Activated B cell treated with CpG ODN at 0.5 μM for 24 hours (primary cell): ENCODE measurements at regions of chr12 and their contacts with region 1.

Region 1: GRCh38 chr12:92928962-92929915 is at the start of gene EEA1:
- DNase-seq: peak; percentile 91
- ATAC-seq: peak; percentile 84
- H3K4me3 Mint-ChIP-seq: peak within 1 kb of the TSS; percentile 89
- H3K27ac Mint-ChIP-seq: peak within 1 kb of the TSS; percentile 96
- H3K4me1 Mint-ChIP-seq: peaks cover 32% of the 10 kb centered on the region
- H3K27me3 Mint-ChIP-seq: no peaks in the 10 kb centered on the region
- CTCF ChIP-seq: no peak
- total RNA-seq, gene EEA1: 21.3 and 22.6 TPM in 2 replicates

Region 2: DNA sequence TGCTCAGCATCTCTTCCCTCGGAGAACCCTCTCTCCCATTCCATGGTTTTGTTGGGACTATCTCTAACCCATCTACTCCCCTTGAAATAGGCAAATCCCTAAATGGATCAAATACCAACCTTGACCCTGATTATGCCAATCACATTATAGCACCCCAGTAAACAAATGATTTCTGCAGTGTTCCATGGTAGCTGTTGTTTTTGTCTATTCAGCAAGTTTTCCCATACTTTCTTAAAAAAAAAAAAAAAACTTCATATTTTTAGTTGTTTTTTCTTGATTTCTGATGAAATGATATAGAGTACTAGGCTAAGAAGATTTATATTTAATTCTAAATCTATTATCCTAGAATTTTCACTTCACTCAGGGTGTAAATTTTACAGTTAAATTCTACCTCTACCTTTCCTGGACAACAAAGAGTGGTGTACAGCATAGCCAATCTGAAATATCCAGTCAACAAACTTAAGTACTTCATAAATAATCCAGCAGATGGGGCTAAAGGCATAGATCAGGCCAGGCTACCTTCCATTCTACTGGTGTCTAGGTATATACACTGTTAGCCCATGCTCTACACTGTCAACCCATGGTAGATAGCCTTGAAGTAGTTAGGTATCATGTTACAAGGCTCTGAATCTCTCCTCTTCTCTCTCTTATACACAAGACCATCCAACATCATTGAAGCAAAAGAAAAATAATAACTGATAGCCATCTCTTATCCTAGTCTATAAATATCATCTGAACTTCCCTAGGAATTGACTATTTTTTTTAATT is 144.3 kb before region 1 on chr12:
- CTCF ChIA-PET with region 1: no interaction called
- POLR2A ChIA-PET with region 1: no interaction called
- intact Hi-C with region 1: loop called (anchors 5 kb)
- DNase-seq: no peak
- ATAC-seq: peak; percentile 98
- H3K4me3 Mint-ChIP-seq: no peak overlapping the region
- H3K27ac Mint-ChIP-seq: no peak overlapping the region
- H3K4me1 Mint-ChIP-seq: no peaks in the 10 kb centered on the region
- H3K27me3 Mint-ChIP-seq: no peaks in the 10 kb centered on the region
- CTCF ChIP-seq: no peak

Region 3: GRCh38 chr12:92844151-92844763 is 85.0 kb before region 1 on chr12:
- CTCF ChIA-PET with region 1: no interaction called
- POLR2A ChIA-PET with region 1: no interaction called
- intact Hi-C with region 1: no loop called
- DNase-seq: no peak
- ATAC-seq: no peak
- H3K4me3 Mint-ChIP-seq: no peak overlapping the region
- H3K27ac Mint-ChIP-seq: no peak overlapping the region
- H3K4me1 Mint-ChIP-seq: no peaks in the 10 kb centered on the region
- H3K27me3 Mint-ChIP-seq: no peaks in the 10 kb centered on the region
- CTCF ChIP-seq: no peak

Region 4: DNA sequence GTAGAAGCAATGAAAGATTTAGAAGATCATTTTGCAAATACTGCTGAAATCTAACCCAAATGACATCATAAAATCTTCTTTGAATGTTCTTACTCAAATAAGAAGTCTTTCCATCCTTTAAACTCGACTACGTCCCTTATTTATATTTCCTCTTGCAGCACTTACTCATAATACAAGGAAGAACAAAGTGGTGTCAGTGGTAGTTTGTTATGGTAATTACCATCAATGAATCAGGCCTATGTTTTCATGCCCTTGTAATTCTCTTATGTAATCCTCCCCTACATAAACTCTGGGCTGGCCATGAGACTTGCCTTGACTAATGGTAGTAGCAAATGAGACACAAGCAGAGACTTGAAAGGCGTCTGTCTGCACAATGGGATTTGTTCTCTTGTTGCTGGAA is 17.2 kb before region 1 on chr12:
- CTCF ChIA-PET with region 1: no interaction called
- POLR2A ChIA-PET with region 1: no interaction called
- intact Hi-C with region 1: loop called (anchors 1 kb)
- DNase-seq: no peak
- ATAC-seq: no peak
- H3K4me3 Mint-ChIP-seq: no peak overlapping the region
- H3K27ac Mint-ChIP-seq: peak overlapping the region; percentile 9
- H3K4me1 Mint-ChIP-seq: peaks cover 42% of the 10 kb centered on the region
- H3K27me3 Mint-ChIP-seq: no peaks in the 10 kb centered on the region
- CTCF ChIP-seq: no peak

Region 5: DNA sequence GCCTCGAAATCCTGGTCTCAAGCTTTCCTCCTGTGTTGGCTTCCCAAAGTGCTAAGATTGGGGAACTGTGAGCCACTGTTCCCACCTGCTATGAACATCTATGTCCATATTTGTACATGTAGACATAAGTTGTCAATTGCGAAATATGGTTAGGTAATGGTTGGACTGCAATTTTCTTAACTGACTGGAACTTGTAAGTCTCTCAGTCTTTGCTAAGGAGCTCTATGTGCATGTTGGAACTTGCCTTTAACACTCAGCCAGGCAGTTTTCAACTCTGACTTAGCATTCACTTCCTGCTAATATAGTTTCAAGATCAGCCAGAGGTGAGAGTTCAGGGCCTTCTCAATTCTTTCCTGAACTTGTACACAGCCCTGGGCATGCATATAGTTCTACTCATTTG is 44.4 kb after region 1 on chr12:
- CTCF ChIA-PET with region 1: no interaction called
- POLR2A ChIA-PET with region 1: interaction called, 24 read pairs
- intact Hi-C with region 1: loop called (anchors 1 kb)
- DNase-seq: no peak
- ATAC-seq: no peak
- H3K4me3 Mint-ChIP-seq: no peak overlapping the region
- H3K27ac Mint-ChIP-seq: peak overlapping the region; percentile 62
- H3K4me1 Mint-ChIP-seq: peaks cover 58% of the 10 kb centered on the region
- H3K27me3 Mint-ChIP-seq: no peaks in the 10 kb centered on the region
- CTCF ChIP-seq: no peak

Region 6: DNA sequence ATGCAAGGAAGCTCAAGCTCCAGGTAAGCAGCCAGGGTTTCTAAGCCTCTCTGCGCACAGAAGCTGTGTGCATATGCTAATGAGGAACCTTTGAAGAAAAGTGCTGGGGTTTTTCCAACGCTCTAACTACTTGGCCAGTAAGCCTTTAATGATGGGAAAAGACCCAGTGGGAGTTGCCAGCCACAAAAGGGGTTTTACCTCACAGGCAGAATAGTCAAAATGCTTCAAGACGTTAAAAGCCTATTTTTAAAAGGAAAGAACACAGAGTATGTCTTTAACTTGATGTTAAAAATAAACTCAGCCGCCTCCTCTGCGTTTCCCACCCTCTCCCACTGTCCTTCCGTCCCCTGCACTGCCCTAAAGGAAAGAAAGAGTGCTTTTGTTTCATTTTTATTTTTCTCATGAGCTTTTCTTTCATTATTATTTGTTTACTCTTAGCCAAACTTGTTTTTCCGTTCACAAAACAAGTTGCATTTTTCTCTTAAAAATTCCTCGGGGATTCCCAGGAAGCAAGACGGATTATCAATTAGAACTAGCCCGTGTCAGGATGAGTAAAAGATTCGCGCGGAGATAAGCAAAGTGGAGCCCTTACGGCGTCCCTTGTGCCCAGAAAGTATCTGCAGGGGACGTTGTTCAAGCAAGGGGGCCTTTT is 238.7 kb after region 1 on chr12:
- CTCF ChIA-PET with region 1: no interaction called
- POLR2A ChIA-PET with region 1: interaction called, 4 read pairs
- intact Hi-C with region 1: loop called (anchors 5 kb)
- DNase-seq: no peak
- ATAC-seq: peak; percentile 80
- H3K4me3 Mint-ChIP-seq: peak overlapping the region; percentile 80
- H3K27ac Mint-ChIP-seq: peak overlapping the region; percentile 80
- H3K4me1 Mint-ChIP-seq: peaks cover 60% of the 10 kb centered on the region
- H3K27me3 Mint-ChIP-seq: no peaks in the 10 kb centered on the region
- CTCF ChIP-seq: no peak

Region 7: DNA sequence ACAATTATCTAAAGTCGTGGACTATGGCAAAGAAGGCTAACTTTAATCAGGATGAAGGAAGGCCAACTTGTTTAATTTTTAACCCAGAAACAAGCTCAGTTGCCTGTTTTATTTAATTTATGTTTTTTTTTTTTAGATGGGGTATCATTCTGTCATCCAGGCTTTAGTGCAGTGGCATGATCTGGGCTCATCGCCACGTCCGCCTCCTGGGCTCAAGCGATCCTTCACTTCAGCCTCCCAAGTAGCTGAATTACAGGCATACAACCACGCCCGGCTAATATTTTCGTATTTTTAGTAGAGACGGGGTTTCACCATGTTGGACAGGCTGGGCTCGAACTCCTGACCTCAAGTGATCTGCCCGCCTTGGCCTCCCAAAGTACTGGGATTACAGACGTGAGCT is 468.2 kb after region 1 on chr12:
- CTCF ChIA-PET with region 1: no interaction called
- POLR2A ChIA-PET with region 1: no interaction called
- intact Hi-C with region 1: loop called (anchors 5 kb)
- DNase-seq: no peak
- ATAC-seq: no peak
- H3K4me3 Mint-ChIP-seq: no peak overlapping the region
- H3K27ac Mint-ChIP-seq: no peak overlapping the region
- H3K4me1 Mint-ChIP-seq: peaks cover 11% of the 10 kb centered on the region
- H3K27me3 Mint-ChIP-seq: no peaks in the 10 kb centered on the region
- CTCF ChIP-seq: no peak

Region 8: DNA sequence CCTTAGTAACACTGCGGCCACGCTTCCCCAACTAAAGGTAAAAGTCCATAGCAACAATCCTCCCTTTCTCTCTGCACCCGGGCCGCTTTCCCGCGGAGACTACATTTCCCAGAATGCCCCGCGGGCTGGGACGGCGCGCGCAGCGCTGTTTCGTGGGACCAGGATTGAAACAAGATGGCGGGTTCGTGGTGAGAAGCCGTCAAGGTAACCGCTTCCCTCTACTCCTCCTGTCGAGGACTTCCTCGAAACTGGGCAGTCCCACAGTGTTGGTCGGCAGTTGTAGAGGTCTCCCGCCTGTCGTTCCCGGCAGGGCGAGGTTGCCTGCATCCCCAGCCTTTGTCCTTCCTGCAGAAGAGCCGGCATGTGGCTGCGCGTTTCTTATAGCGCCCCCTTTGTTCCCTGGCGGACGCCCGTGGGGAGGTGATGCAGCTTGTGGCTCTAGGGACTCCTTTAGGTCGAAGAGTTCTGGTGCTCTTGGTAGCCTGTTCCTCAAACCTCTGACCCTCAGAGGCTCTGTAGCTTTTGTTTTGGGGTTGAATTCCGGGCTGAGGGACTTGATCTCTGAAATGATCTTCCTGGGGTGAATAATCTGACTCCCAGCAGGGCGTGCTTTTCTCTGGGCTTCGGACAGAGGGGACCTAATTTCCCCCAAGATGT is 538.2 kb after region 1 on chr12 and contains the start of gene MRPL42:
- CTCF ChIA-PET with region 1: no interaction called
- POLR2A ChIA-PET with region 1: interaction called, 3 read pairs
- intact Hi-C with region 1: loop called (anchors 1 kb)
- DNase-seq: peak; percentile 93
- ATAC-seq: peak; percentile 92
- H3K4me3 Mint-ChIP-seq: peak within 1 kb of the TSS; percentile 95
- H3K27ac Mint-ChIP-seq: peak within 1 kb of the TSS; percentile 94
- H3K4me1 Mint-ChIP-seq: peaks cover 23% of the 10 kb centered on the region
- H3K27me3 Mint-ChIP-seq: no peaks in the 10 kb centered on the region
- CTCF ChIP-seq: no peak
- total RNA-seq, gene MRPL42: 40.9 and 44.6 TPM in 2 replicates